BJ (cell line): ENCODE measurements at regions of chr1 and their contacts with region 1.

Region 1: DNA sequence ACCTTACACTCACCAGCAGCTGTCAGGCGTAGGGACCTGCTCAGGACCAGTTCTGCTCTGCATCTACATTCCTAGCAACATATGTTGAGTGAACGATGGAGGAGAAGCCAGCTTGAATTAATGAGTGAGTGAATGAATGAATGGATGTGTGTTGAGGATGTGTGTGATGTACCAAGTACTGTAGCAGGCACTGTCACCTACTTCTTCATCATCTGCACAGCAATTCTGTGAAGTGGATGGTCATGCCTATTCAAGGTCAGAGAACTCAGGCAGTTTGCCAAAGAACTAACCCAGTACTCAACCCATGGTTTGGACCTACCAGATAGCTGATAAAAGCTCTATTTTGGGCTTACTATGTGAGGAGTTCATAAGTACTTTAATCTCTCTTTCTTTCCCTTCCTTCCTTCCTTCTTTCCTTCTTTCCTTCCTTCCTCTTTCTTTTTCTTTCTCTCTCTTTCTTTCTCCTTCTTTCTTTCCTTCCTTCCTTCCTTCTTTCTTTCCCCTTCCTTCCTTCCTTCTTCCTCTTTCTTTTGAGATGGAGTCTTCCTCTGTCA is 56.9 kb downstream of the ATP1A1 start:
- DNase-seq: no peak
- H3K4me3 ChIP-seq: no peak overlapping the region
- H3K27me3 ChIP-seq: peaks cover 10% of the 10 kb centered on the region
- CTCF ChIP-seq: no peak

Region 2: DNA sequence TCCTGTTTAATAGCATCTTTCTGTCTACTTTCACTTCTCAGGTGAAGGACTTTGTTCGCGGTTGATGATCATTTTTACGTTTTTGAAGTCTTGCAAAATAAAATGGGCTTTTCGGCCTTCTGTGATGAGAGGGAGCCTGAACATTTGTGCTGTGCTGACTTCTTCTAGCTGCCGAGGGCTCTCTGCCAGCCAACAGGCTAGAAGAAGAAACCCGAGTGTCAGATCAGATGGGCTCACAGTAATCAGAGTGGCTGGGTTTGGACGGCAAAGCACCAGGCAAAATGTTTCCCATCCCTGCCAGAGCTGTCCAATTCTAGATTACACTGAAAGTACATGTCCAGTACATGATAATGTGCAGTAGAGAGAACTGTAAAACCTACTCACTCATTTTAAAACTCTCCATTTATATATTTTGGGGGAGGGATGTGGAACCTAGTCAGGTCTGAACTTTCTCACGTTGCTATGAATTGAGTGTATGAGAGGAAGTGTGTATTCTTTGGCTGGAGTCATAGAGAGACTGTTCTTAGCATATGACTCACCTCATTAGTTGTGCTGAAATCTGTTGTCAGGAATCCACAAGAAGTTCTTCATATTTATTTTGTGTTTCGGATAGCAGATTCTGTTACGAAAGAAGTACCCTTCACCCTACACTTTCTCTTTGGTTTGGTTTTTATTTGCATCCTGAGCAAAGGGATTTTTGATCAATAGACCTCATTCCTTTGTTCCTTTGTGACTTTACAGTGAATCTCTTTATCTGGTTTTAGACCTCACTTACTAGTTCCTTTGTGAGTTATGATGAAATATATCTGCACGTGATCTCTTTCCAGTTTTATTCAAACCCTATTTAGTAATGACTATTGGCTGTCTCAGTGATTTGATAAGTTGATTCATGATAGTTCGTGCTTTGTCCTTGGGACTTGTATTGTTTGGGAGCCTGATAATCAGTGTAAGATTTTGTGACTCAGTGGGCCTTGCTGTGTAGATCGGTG is 52.1 kb before region 1 on chr1:
- CTCF ChIA-PET with region 1: no interaction called
- POLR2A ChIA-PET with region 1: no interaction called
- DNase-seq: peak; percentile 79
- H3K4me3 ChIP-seq: peak overlapping the region; percentile 23; the same call in 1 of the 2 replicates
- H3K27me3 ChIP-seq: no peaks in the 10 kb centered on the region
- CTCF ChIP-seq: no peak

Region 3: GRCh38 chr1:116418091-116418830 is 11.6 kb before region 1 on chr1:
- CTCF ChIA-PET with region 1: interaction called, 11 read pairs
- POLR2A ChIA-PET with region 1: no interaction called
- DNase-seq: no peak
- H3K4me3 ChIP-seq: peak overlapping the region; percentile 69
- H3K27me3 ChIP-seq: 0 out of 2 replicates have a peak, but pooled peaks cover 1% of the 10 kb centered on the region
- CTCF ChIP-seq: no peak

Region 4: GRCh38 chr1:116457946-116458604 is 28.2 kb after region 1 on chr1:
- CTCF ChIA-PET with region 1: no interaction called
- POLR2A ChIA-PET with region 1: no interaction called
- DNase-seq: no peak
- H3K4me3 ChIP-seq: no peak overlapping the region
- H3K27me3 ChIP-seq: peaks cover 1% of the 10 kb centered on the region; the same call in 1 of the 2 replicates
- CTCF ChIP-seq: no peak